ENCODE measurements at regions of chr2 and their contacts with region 1.

Region 1: DNA sequence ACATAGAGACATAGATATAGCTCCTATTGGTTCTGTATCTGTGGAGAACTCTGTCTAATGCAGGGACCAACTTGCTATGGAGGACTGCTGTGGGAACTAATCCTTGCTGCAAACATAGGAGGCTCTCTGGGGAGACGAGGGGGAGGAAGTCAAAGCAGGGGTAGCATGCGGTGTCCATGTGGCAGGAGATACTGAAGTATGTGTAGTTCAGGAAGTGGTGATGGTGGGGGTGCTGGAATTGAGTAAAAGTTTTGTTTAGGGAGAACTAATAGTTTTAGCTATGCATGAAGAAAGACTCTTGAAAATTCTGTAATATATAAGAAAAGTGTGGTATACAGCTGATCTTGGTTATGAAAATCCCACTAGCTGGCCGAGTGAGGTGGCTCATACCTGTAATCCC is 62.0 kb downstream of the ANKRD44 start:
- DNase-seq: no peak
- H3K4me3 ChIP-seq: no peak overlapping the region
- H3K27ac ChIP-seq: no peak overlapping the region
- H3K4me1 ChIP-seq: peaks cover 0 to 5% of the 10 kb centered on the region in 2 donors
- H3K27me3 ChIP-seq: no peaks in the 10 kb centered on the region
- CTCF ChIP-seq: no peak

Region 2: GRCh38 chr2:197209742-197210408 is 38.7 kb before region 1 on chr2:
- intact Hi-C with region 1: loop called (anchors 5 kb)
- DNase-seq: no peak
- H3K4me3 ChIP-seq: no peak overlapping the region
- H3K27ac ChIP-seq: no peak overlapping the region
- H3K4me1 ChIP-seq: peaks cover 18 to 40% of the 10 kb centered on the region in 2 donors
- H3K27me3 ChIP-seq: no peaks in the 10 kb centered on the region
- CTCF ChIP-seq: no peak

Measured in ascending aorta (tissue), 2 donors.